ENCODE measurements at regions of chr2 and their contacts with region 1.

Region 1: GRCh38 chr2:26172871-26173775 is at the start of gene GAREM2:
- DNase-seq: no peak
- ATAC-seq: peak; percentile 21
- H3K4me3 ChIP-seq: peak within 1 kb of the TSS; percentile 27
- H3K4me3 Mint-ChIP-seq: peak within 1 kb of the TSS; percentile 71 to 89 (median 80)
- H3K27ac ChIP-seq: no peak within 1 kb of the TSS
- H3K27ac Mint-ChIP-seq: no peak within 1 kb of the TSS
- H3K4me1 ChIP-seq: no peaks in the 10 kb centered on the region
- H3K4me1 Mint-ChIP-seq: peaks cover 9 to 19% (median 15%) of the 10 kb centered on the region in 7 donors
- H3K27me3 ChIP-seq: peaks cover 0 to 9% of the 10 kb centered on the region in 2 donors
- H3K27me3 Mint-ChIP-seq: peaks cover 30 to 61% (median 40%) of the 10 kb centered on the region in 5 donors
- total RNA-seq, gene GAREM2: 4.5 to 8.4 (median 4.9) TPM

Region 2: GRCh38 chr2:26184555-26185303 is 11.6 kb after region 1 on chr2:
- CTCF ChIA-PET with region 1: interaction called, 4 read pairs
- POLR2A ChIA-PET with region 1: interaction called, 9 read pairs
- intact Hi-C with region 1: loop called in 1 of 2 experiments (anchors 1 kb)
- DNase-seq: peak; percentile 82 to 91 (median 88)
- ATAC-seq: peak; percentile 98
- H3K4me3 ChIP-seq: peak overlapping the region; percentile 68
- H3K4me3 Mint-ChIP-seq: peak overlapping the region; percentile 79 to 91 (median 85)
- H3K27ac ChIP-seq: peak overlapping the region; percentile 71
- H3K27ac Mint-ChIP-seq: peak overlapping the region in 7 of 9 donors; percentile 25 to 90 (median 67)
- H3K4me1 ChIP-seq: peaks cover 5 to 8% of the 10 kb centered on the region in 2 donors
- H3K4me1 Mint-ChIP-seq: peaks cover 6 to 30% (median 23%) of the 10 kb centered on the region in 7 donors
- H3K27me3 ChIP-seq: no peaks in the 10 kb centered on the region
- H3K27me3 Mint-ChIP-seq: peaks cover 11 to 23% (median 15%) of the 10 kb centered on the region in 5 donors

Region 3: DNA sequence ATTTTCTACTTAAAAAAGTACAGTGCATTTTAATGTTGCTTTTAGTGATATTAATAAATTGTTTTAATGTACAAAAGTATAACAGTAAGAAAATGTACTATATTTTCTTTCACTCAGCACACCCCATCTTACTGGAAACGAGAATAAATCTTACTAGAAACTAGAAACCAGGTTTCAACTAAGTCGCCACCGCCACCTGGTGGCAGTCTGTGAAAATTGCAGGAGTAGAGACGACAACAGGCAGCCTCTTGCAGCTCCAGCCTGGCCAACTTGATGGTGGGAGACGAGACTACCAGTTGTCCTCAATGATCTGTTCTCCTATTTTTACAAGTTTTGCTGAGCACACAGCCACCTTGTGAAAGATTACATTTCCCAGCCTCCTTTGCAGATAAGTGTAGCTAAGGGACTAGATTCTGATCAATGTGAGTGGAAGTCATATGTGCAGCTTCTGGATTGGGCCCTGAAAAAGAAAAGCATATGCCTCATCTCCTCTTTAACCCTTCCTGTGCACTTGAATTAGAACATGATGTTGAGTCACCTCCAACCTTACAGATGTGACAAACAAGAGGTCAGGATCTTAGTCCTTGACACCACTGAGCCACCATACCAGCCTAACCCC is 296.1 kb after region 1 on chr2:
- CTCF ChIA-PET with region 1: no interaction called
- POLR2A ChIA-PET with region 1: no interaction called
- intact Hi-C with region 1: loop called (anchors 1 to 5 kb)
- DNase-seq: peak in 8 of 9 donors; percentile 10 to 61 (median 34)
- ATAC-seq: peak; percentile 40
- H3K4me3 ChIP-seq: no peak overlapping the region
- H3K4me3 Mint-ChIP-seq: no peak overlapping the region
- H3K27ac ChIP-seq: no peak overlapping the region
- H3K27ac Mint-ChIP-seq: no peak overlapping the region
- H3K4me1 ChIP-seq: no peaks in the 10 kb centered on the region
- H3K4me1 Mint-ChIP-seq: no peaks in the 10 kb centered on the region
- H3K27me3 ChIP-seq: no peaks in the 10 kb centered on the region
- H3K27me3 Mint-ChIP-seq: no peaks in the 10 kb centered on the region

Region 4: GRCh38 chr2:26577434-26578112 is 404.4 kb after region 1 on chr2:
- CTCF ChIA-PET with region 1: no interaction called
- POLR2A ChIA-PET with region 1: no interaction called
- intact Hi-C with region 1: loop called in 1 of 2 experiments (anchors 5 kb)
- DNase-seq: peak; percentile 17 to 66 (median 52)
- ATAC-seq: peak; percentile 88
- H3K4me3 ChIP-seq: no peak overlapping the region
- H3K4me3 Mint-ChIP-seq: no peak overlapping the region
- H3K27ac ChIP-seq: no peak overlapping the region
- H3K27ac Mint-ChIP-seq: no peak overlapping the region
- H3K4me1 ChIP-seq: no peaks in the 10 kb centered on the region
- H3K4me1 Mint-ChIP-seq: peaks cover 0 to 5% (median 0%) of the 10 kb centered on the region in 7 donors
- H3K27me3 ChIP-seq: peaks cover 0 to 5% of the 10 kb centered on the region in 2 donors
- H3K27me3 Mint-ChIP-seq: peaks cover 5 to 13% (median 10%) of the 10 kb centered on the region in 5 donors